H1 (cell line): ENCODE measurements at regions of chr22 and their contacts with region 1.

Region 1: DNA sequence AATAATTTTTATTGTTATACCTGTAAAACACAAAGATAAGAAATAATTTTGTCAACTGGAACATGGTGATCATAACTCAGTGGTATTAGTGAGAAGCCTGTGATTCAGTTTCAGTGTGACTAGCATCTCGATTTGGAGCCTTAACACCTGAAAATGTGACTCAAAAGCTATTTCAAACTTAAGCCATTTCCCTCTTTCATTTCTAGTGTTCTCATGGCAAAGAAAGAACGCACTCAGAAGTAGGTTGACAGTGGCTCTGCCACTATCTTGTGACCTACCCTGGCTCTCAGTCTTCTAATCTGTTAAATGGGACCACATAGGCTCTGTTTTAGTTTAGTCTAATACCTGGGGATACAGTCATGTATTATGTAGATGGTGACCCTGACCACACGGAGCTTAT is 62.7 kb downstream of the ISX start:
- DNase-seq: no peak
- H3K4me3 ChIP-seq: no peak overlapping the region
- H3K27ac ChIP-seq: no peak overlapping the region
- H3K4me1 ChIP-seq: peaks cover 0 to 6% (median 2%) of the 10 kb centered on the region in 4 experiments; a peak in 1 of 7 replicates
- H3K27me3 ChIP-seq: no peaks in the 10 kb centered on the region
- CTCF ChIP-seq: no peak
- EP300 ChIP-seq: no peak
- POLR2A ChIP-seq: no peak
- RAD21 ChIP-seq: no peak

Region 2: GRCh38 chr22:35023692-35024363 is 104.8 kb before region 1 on chr22:
- CTCF ChIA-PET with region 1: no interaction called
- POLR2A ChIA-PET with region 1: no interaction called
- DNase-seq: peak; percentile 63 to 99
- H3K4me3 ChIP-seq: peak overlapping the region in 2 of 4 experiments; percentile 29 to 38; a peak in 2 of 8 replicates
- H3K27ac ChIP-seq: no peak overlapping the region
- H3K4me1 ChIP-seq: no peaks in the 10 kb centered on the region; a peak in 2 of 7 replicates
- H3K27me3 ChIP-seq: peaks cover 0 to 4% (median 2%) of the 10 kb centered on the region in 4 experiments; a peak in 1 of 7 replicates
- CTCF ChIP-seq: peak; percentile 92 to 93 (median 93)
- EP300 ChIP-seq: no peak
- POLR2A ChIP-seq: no peak
- RAD21 ChIP-seq: peak; percentile 97 to 99

Region 3: GRCh38 chr22:35116817-35117216 is 11.8 kb before region 1 on chr22:
- CTCF ChIA-PET with region 1: interaction called, 13 read pairs
- POLR2A ChIA-PET with region 1: interaction called, 4 read pairs
- DNase-seq: no peak
- H3K4me3 ChIP-seq: no peak overlapping the region
- H3K27ac ChIP-seq: no peak overlapping the region
- H3K4me1 ChIP-seq: no peaks in the 10 kb centered on the region
- H3K27me3 ChIP-seq: no peaks in the 10 kb centered on the region
- CTCF ChIP-seq: peak in 2 of 3 experiments; percentile 50 to 57; a peak in 2 of 4 replicates
- EP300 ChIP-seq: no peak
- POLR2A ChIP-seq: no peak
- RAD21 ChIP-seq: no peak

Region 4: GRCh38 chr22:35140879-35141745 is 12.5 kb after region 1 on chr22:
- CTCF ChIA-PET with region 1: interaction called, 11 read pairs
- POLR2A ChIA-PET with region 1: interaction called, 4 read pairs
- DNase-seq: peak; percentile 51 to 88
- H3K4me3 ChIP-seq: no peak overlapping the region
- H3K27ac ChIP-seq: no peak overlapping the region
- H3K4me1 ChIP-seq: no peaks in the 10 kb centered on the region
- H3K27me3 ChIP-seq: no peaks in the 10 kb centered on the region
- CTCF ChIP-seq: peak; percentile 75 to 81 (median 76)
- EP300 ChIP-seq: no peak
- POLR2A ChIP-seq: no peak
- RAD21 ChIP-seq: peak; percentile 88 to 92